ENCODE measurements at regions of chr4 and their contacts with region 1.

Region 1: GRCh38 chr4:154779362-154779947 is 1.6 kb upstream of the RBM46 start:
- DNase-seq: no peak

Region 2: GRCh38 chr4:154686838-154687237 is 92.6 kb before region 1 on chr4:
- intact Hi-C with region 1: loop called (anchors 1 kb)
- DNase-seq: no peak

Region 3: DNA sequence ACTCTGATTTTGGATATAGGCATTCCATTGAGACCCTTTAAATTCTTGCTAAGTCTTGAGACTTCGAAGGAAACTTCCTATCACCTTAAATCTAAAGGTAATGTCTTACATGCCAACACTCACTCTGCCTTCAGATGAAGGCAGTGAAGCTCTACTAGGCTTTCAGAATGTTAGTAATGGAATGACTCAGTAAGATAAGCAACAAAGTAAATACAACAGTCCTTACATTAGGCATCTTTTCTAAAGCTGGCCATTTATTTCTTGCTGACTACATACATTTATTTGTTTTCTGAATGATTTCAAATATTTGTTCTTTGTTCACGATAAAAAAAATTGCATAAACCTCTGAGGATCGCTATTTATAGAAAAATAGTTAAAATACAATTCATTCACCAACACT is 1043.1 kb after region 1 on chr4:
- intact Hi-C with region 1: no loop called
- DNase-seq: no peak